Endothelial cell of umbilical vein (primary cell): ENCODE measurements at regions of chrX and their contacts with region 1.

Region 1: DNA sequence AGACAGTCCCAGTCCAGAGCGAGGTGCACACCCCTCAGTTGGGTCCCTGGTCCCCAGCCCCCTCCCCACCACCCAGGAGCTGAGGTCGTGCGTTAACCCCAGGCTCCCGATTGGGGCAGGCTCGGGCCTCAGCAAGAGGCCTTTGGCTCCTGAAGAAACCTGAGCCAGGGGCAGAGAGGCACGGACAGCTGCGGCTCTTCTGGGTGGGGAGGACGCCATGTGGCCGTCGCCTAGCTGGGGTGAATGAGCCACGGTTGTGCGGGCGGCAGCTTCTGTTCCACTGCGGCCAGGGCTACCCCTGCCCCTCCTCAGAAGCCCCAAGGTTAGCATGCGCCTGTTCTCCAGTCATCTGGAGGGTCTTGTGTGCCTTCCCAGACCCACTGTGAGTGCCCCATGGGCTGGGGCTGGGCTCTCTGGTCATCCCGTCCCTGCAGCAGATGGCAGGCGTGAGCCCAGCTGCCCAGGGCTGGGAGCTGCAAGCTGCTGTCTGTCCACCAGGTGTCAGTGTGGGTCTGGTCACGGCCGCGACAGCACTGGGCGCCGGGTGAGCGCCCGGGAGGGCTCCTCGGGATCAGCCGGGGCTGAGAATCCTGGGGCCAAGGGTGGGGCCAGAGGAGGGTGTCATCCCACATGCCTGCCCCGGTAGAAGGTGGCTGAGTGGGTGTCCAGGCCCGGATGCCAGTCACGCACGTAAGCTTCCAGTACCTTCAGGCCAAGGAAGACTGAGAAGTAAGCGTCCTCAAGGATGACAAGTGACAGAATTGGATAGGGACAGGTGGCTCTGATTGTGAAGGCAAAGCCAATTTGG is 21.9 kb downstream of the ATP2B3 start:
- DNase-seq: peak; percentile 44
- H3K4me3 ChIP-seq: no peak overlapping the region
- H3K27ac ChIP-seq: no peak overlapping the region
- H3K4me1 ChIP-seq: no peaks in the 10 kb centered on the region
- H3K27me3 ChIP-seq: no peaks in the 10 kb centered on the region
- CTCF ChIP-seq: peak; percentile 69 to 89
- POLR2A ChIP-seq: no peak

Region 2: DNA sequence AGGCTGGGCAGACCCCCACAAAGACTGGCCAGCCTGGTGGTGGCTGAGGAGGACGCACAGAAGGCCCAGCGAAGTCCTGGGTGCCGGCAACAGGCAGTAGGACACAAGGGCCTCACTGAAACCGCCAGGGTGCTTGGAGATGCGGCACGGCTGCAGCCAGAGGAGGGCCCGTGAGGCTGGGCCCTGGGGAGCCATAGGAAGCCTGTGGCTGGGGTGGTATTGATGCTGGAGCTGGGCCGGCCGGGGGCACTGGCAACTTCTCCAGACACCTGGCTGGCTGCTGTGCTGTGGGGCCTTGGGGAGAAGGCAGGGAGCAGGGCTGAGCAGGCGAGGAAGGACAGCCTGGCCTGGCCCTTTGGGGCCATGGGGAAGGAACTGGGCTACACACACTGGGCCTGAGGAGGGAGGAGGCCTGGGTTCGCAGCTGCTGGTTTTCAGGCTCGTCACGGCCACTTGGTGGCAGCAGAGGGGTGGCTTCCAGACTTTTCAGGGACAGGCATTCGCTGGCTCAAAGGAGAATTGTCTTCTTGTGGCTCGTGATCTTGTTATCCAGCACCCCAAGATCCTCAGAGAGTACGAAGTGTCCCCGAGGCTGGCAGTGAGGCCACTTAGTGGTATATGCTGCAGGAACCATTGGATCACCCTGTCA is 15.3 kb after region 1 on chrX:
- CTCF ChIA-PET with region 1: interaction called, 13 read pairs
- POLR2A ChIA-PET with region 1: no interaction called
- dilution Hi-C with region 1: no loop called
- intact Hi-C with region 1: no loop called
- DNase-seq: peak; percentile 24
- H3K4me3 ChIP-seq: no peak overlapping the region
- H3K27ac ChIP-seq: no peak overlapping the region
- H3K4me1 ChIP-seq: no peaks in the 10 kb centered on the region
- H3K27me3 ChIP-seq: no peaks in the 10 kb centered on the region
- CTCF ChIP-seq: peak; percentile 48 to 71
- POLR2A ChIP-seq: no peak

Region 3: GRCh38 chrX:153582896-153583295 is 43.5 kb after region 1 on chrX:
- CTCF ChIA-PET with region 1: no interaction called
- POLR2A ChIA-PET with region 1: no interaction called
- dilution Hi-C with region 1: no loop called
- intact Hi-C with region 1: no loop called
- DNase-seq: peak; percentile 25
- H3K4me3 ChIP-seq: no peak overlapping the region
- H3K27ac ChIP-seq: no peak overlapping the region
- H3K4me1 ChIP-seq: no peaks in the 10 kb centered on the region
- H3K27me3 ChIP-seq: no peaks in the 10 kb centered on the region
- CTCF ChIP-seq: no peak
- POLR2A ChIP-seq: no peak

Region 4: DNA sequence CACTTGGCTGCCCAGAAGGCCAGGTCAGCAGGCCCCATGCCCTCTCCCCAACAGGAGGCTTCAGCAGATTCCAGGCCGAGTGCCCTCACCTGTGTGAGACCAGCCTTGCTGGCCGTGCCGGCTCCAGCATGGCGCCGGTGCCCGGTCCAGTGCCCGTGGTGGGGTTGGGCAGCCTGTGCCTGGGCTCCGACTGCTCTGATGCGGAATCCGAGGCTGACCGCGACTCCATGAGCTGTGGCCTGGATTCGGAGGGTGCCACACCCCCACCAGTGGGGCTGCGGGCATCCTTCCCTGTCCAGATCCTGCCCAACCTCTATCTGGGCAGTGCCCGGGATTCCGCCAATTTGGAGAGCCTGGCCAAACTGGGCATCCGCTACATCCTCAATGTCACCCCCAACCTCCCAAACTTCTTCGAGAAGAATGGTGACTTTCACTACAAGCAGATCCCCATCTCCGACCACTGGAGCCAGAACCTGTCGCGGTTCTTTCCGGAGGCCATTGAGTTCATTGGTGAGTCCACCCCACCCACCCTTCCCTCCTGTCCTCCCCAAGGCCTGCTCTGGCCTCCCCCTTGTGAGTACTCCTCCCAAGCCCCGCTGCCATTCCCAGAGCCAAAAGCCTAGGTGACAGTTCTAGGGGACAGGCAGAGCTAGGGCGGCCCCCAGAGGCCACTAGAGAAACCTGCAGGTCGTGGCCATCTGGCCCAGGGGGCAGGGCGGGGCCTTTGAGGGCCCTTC is 110.0 kb after region 1 on chrX:
- CTCF ChIA-PET with region 1: interaction called, 9 read pairs
- POLR2A ChIA-PET with region 1: no interaction called
- dilution Hi-C with region 1: no loop called
- intact Hi-C with region 1: loop called (anchors 1 kb)
- DNase-seq: no peak
- H3K4me3 ChIP-seq: no peak overlapping the region
- H3K27ac ChIP-seq: no peak overlapping the region
- H3K4me1 ChIP-seq: no peaks in the 10 kb centered on the region
- H3K27me3 ChIP-seq: peaks cover 34 to 38% of the 10 kb centered on the region in 2 experiments
- CTCF ChIP-seq: peak; percentile 19 to 51
- POLR2A ChIP-seq: no peak

Region 5: DNA sequence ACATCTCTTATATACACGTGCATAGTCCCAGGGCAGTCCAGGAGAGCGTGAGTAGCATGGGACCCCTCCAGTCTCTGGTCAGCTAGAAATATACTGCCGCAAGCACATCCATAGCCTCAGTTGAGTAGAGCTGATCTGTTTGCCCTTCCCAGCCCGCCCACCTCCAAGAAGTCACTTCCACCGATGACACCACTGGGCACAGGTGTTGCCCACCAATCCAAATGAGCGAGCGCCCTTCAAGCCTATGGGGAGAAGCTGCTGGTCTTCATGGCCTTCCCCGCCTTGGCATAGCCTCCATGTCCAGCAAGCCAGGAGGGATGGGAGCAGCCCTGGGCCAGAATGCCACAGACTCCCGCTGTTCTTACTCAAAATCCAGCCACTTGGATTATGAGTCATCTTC is 117.8 kb after region 1 on chrX:
- CTCF ChIA-PET with region 1: interaction called, 15 read pairs
- POLR2A ChIA-PET with region 1: no interaction called
- dilution Hi-C with region 1: no loop called
- intact Hi-C with region 1: no loop called
- DNase-seq: no peak
- H3K4me3 ChIP-seq: no peak overlapping the region
- H3K27ac ChIP-seq: no peak overlapping the region
- H3K4me1 ChIP-seq: no peaks in the 10 kb centered on the region
- H3K27me3 ChIP-seq: peaks cover 0 to 9% of the 10 kb centered on the region in 2 experiments
- CTCF ChIP-seq: no peak
- POLR2A ChIP-seq: no peak

Region 6: GRCh38 chrX:153662266-153662665 is 122.9 kb after region 1 on chrX:
- CTCF ChIA-PET with region 1: interaction called, 60 read pairs
- POLR2A ChIA-PET with region 1: no interaction called
- dilution Hi-C with region 1: no loop called
- intact Hi-C with region 1: no loop called
- DNase-seq: peak; percentile 39
- H3K4me3 ChIP-seq: no peak overlapping the region
- H3K27ac ChIP-seq: no peak overlapping the region
- H3K4me1 ChIP-seq: no peaks in the 10 kb centered on the region
- H3K27me3 ChIP-seq: peaks cover 1 to 14% of the 10 kb centered on the region in 2 experiments
- CTCF ChIP-seq: peak; percentile 46 to 50
- POLR2A ChIP-seq: no peak

Region 7: DNA sequence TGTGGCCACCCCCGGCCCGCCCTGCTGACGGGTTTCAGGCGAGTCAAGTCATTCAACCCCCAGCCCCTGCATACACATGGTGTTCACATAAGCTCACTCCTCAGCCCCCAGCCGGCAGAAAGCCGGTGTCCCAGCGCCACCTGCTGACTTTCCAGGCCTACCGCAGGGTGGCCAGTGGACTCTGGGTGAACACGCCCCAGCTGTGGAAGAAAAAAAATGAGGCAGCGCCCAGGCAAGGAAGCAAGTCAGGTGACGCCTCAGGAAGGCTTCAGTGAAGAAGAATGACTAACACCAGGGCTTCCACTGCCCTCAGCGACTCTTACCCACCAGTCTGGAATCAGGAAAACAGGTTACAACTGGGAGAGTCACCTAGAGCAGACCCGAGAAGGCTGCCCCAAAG is 169.0 kb after region 1 on chrX:
- CTCF ChIA-PET with region 1: interaction called, 10 read pairs
- POLR2A ChIA-PET with region 1: no interaction called
- dilution Hi-C with region 1: no loop called
- intact Hi-C with region 1: loop called (anchors 1 kb)
- DNase-seq: peak; percentile 77
- H3K4me3 ChIP-seq: no peak overlapping the region
- H3K27ac ChIP-seq: no peak overlapping the region
- H3K4me1 ChIP-seq: peaks cover 12% of the 10 kb centered on the region
- H3K27me3 ChIP-seq: no peaks in the 10 kb centered on the region
- CTCF ChIP-seq: peak; percentile 66 to 67
- POLR2A ChIP-seq: no peak